ENCODE measurements at regions of chr17 and their contacts with region 1.

Region 1: GRCh38 chr17:33955461-33955860 is 299.6 kb upstream of the CCL2 start:
- DNase-seq: no peak
- ATAC-seq: no peak
- H3K4me3 ChIP-seq: no peak overlapping the region
- H3K27ac ChIP-seq: no peak overlapping the region
- H3K4me1 ChIP-seq: no peaks in the 10 kb centered on the region
- H3K27me3 ChIP-seq: peaks cover 0 to 5% (median 0%) of the 10 kb centered on the region in 9 donors
- CTCF ChIP-seq: no peak
- POLR2A ChIP-seq: no peak

Region 2: GRCh38 chr17:33892717-33893591 is 62.5 kb before region 1 on chr17:
- intact Hi-C with region 1: loop called in 1 of 10 experiments (anchors 10 kb)
- DNase-seq: no peak
- ATAC-seq: no peak
- H3K4me3 ChIP-seq: no peak overlapping the region
- H3K27ac ChIP-seq: no peak overlapping the region
- H3K4me1 ChIP-seq: no peaks in the 10 kb centered on the region
- H3K27me3 ChIP-seq: peaks cover 0 to 13% (median 4%) of the 10 kb centered on the region in 9 donors
- CTCF ChIP-seq: no peak
- POLR2A ChIP-seq: no peak

Measured in heart left ventricle (tissue), 16 donors.